ENCODE measurements at regions of chr9 and their contacts with region 1.

Region 1: GRCh38 chr9:20622330-20623020 is at the start of gene MLLT3:
- H3K4me3 ChIP-seq: peak within 1 kb of the TSS; percentile 86
- H3K27ac ChIP-seq: peak within 1 kb of the TSS; percentile 99
- H3K4me1 ChIP-seq: peaks cover 15% of the 10 kb centered on the region
- CTCF ChIP-seq: no peak

Region 2: DNA sequence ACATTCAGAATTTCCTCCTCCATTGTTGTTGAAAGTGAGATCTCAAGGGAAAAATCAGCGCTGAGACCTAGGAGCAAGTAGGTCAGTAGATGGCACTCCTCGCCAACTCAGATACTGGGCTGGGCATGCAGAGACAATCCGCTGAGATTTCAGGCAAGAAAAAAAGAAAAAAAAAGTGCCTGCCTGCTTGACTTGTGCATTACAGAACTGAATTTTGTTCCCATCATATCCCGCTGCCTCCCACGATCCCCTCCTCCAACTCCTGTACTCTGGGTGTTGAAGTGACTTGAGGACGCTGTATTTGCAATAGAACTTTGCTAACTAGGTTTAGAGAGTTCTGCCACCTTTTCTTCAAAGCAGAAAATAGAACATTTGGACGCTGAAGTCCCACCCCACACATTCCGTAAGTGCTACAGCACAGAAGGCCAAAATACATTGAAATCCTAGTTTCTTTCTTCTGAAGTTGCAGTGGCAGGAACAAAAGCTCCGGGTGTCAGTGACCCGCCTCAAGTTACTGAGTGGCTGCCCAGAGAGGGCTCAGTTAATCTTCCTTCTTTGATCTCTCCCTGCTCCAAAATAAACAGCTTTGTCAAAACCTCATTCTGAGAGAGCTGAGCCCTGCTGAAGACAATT is 266.0 kb before region 1 on chr9:
- CTCF ChIA-PET with region 1: interaction called, 10 read pairs
- POLR2A ChIA-PET with region 1: interaction called, 5 read pairs
- H3K4me3 ChIP-seq: peak overlapping the region; percentile 8; the same call in 1 of the 2 replicates
- H3K27ac ChIP-seq: peak overlapping the region; percentile 78
- H3K4me1 ChIP-seq: peaks cover 11% of the 10 kb centered on the region
- CTCF ChIP-seq: peak; percentile 84

Region 3: DNA sequence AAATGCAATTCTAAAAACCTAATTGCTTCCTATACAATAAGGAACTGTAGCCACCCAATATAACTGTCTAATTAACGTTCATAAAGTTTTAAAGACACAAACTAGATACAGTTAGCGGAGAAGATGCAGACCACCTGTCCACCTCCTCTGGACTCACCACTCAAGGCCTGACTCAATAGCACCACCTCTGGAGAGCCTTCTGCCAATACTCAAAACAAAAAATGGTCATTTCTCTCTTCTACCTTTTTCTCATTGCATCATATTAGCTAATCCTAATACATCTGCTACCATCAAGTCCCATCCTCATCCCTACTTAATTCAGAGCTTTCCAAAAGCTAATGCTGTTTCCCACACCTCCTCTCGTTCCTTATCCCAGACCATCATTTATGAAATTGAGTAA is 160.1 kb before region 1 on chr9:
- CTCF ChIA-PET with region 1: no interaction called
- POLR2A ChIA-PET with region 1: no interaction called
- H3K4me3 ChIP-seq: no peak overlapping the region
- H3K27ac ChIP-seq: no peak overlapping the region
- H3K4me1 ChIP-seq: peaks cover 20% of the 10 kb centered on the region
- CTCF ChIP-seq: no peak

Region 4: GRCh38 chr9:20573023-20573422 is 49.5 kb before region 1 on chr9:
- CTCF ChIA-PET with region 1: interaction called, 3 read pairs
- POLR2A ChIA-PET with region 1: interaction called, 10 read pairs
- H3K4me3 ChIP-seq: no peak overlapping the region
- H3K27ac ChIP-seq: no peak overlapping the region
- H3K4me1 ChIP-seq: peaks cover 12% of the 10 kb centered on the region
- CTCF ChIP-seq: no peak

Region 5: DNA sequence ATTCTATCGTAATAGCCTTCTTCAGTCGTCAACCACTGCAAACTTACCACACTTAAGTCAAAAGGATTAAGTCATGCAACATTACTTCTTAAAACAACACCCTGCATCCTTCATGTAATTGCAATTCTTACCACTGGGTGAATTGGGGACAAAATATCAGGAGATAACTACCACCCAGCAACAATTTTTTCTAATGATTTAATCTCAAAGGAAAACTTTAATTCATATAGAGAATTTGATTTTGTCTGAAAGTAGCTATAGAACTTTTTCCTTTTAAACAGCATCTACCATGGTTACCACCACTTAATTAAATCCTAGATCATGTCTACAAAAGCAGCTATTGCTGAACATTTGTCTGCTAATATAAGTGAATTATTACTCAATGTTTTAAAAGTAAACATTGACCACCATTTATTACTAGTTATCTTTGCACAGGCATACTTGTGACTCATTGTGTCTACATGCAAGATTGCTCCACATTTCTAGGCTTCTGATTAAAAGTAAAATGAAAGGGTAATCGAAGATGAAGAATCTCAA is 10.7 kb before region 1 on chr9:
- CTCF ChIA-PET with region 1: interaction called, 6 read pairs
- POLR2A ChIA-PET with region 1: interaction called, 17 read pairs
- H3K4me3 ChIP-seq: no peak overlapping the region
- H3K27ac ChIP-seq: peak overlapping the region; percentile 38; the same call in 1 of the 2 replicates
- H3K4me1 ChIP-seq: peaks cover 43% of the 10 kb centered on the region
- CTCF ChIP-seq: no peak

Region 6: DNA sequence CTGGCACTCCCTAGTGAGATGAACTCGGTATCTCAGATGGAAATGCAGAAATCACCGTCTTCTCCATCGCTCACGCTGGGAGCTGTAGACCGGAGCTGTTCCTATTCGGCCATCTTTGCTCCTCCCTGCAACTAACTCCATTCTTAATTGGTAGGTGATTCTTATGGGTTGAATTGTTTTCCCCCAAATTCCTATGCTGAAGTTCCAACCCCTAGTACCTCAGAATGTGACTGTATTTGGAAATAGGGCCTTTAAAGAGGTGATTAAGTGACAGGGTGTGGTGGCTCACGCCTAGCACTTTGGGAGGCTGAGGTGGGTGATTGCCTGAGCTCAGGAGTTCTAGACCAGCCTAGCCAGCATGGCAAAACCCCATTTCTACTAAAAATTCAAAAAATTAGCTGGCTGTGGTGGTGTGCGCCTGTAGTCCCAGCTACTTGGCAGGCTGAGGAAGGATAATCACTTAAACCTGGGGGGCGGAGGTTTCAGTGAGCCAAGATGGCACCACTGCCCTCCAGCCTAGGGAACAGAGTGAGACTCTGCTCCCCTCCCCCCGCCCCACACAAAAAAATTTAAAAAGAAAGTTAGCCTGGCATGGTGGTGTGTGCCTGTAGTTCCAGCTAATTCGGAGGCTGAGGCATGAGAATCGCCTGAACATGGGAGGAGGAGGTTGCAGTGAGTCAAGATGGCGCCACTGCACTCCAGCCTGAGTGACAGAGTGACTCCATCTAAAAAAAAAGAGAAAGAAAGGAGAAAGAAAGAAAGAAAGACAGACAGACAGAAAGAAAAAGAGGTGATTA is 36.4 kb after region 1 on chr9:
- CTCF ChIA-PET with region 1: interaction called, 6 read pairs
- POLR2A ChIA-PET with region 1: interaction called, 23 read pairs
- H3K4me3 ChIP-seq: peak overlapping the region; percentile 60
- H3K27ac ChIP-seq: peak overlapping the region; percentile 64; the same call in 1 of the 2 replicates
- H3K4me1 ChIP-seq: peaks cover 7% of the 10 kb centered on the region
- CTCF ChIP-seq: peak; percentile 44; the same call in 1 of the 2 replicates

Region 7: DNA sequence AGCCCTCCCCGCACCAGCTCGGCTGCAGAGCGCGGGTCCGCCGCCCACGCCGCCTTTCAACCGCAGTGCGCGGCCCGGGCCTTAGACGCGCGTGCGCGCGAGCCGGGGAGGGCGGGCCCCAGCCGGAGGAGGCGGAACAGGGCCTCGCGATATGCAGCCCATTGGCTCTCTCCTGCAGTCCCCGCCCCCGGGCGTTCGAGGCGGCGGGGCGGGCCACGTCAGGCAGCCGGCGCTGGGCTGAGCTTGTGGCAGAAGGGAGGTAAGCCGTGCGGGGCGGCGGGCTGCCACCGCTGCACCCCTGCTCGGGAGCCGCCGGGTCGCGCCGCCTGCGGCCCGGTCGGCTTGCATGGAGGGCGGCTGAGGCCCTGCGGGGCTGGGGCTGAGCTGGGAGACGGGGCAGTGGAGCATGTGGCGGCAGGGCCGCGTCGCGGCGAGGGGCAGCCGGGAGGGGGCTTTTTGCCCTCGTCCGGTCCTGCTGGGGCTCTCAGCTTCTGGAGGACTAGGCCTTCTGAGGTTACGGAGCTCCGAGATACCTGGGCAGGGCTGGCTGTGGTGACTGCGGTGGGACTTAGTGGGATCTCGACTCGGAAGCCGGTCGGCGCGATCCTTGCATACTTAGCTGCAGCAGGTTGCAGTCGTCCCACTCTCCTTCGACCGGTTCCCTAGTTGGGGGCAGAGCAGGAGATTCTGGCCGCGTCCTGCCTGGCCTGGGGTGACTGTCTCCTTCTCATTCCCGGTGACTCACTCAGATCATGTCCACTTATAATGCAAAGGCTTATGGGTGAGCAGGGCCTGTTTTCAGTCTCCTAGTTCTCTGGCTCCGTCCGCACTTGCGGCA is 61.8 kb after region 1 on chr9 and contains the start of gene FOCAD:
- CTCF ChIA-PET with region 1: interaction called, 8 read pairs
- POLR2A ChIA-PET with region 1: interaction called, 53 read pairs
- H3K4me3 ChIP-seq: peak within 1 kb of the TSS; percentile 87
- H3K27ac ChIP-seq: peak within 1 kb of the TSS; percentile 91
- H3K4me1 ChIP-seq: peaks cover 8% of the 10 kb centered on the region; the same call in 1 of the 2 replicates
- CTCF ChIP-seq: no peak; the same call in 1 of the 2 replicates

Region 8: GRCh38 chr9:21286659-21287058 is 664.2 kb after region 1 on chr9:
- CTCF ChIA-PET with region 1: no interaction called
- POLR2A ChIA-PET with region 1: no interaction called
- H3K4me3 ChIP-seq: no peak overlapping the region
- H3K27ac ChIP-seq: no peak overlapping the region
- H3K4me1 ChIP-seq: no peaks in the 10 kb centered on the region
- CTCF ChIP-seq: no peak

Measured in HEK293 (cell line).